A549 (cell line): ENCODE measurements at regions of chr10 and their contacts with region 1.

Region 1: DNA sequence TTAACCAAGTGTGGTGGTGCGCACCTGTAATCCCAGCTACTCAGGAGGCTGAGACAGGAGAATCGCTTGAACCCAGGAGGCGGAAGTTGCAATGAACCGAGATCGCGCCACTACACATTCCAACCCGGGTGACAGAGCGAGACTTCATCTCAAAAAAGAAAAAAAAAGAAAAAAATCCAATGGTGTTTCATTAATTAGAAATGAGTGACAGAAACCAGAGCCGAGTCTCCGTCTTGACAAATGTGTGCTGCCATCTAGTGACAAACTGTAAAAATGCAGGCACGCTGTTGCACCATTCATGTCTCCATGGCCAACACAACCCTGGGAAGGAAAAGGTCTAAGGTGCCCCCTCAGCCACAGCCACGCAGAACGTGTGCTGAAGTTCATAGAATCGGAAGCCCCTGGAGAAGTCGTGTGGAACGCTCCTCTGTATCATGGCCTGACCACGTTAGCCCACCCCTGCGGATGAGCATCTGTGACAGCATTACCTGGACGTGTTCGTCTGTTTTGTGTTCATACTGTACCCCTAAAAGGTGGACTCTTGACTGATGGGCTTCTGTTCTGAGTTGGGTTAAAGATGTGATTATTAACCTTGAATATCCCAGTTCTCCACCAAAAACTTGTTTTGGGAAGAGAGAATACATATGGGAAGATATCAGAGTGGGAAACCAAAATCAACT is 94.9 kb downstream of the LYZL2 start:
- DNase-seq: peak; percentile 61 to 85
- ATAC-seq: peak; percentile 41 to 58; a peak in 3 of 6 replicates
- H3K4me3 ChIP-seq: no peak overlapping the region
- H3K27ac ChIP-seq: peak overlapping the region; percentile 78 to 88
- H3K4me1 ChIP-seq: peaks cover 61% of the 10 kb centered on the region
- CTCF ChIP-seq: peak; percentile 84
- EP300 ChIP-seq: no peak
- POLR2A ChIP-seq: no peak
- RAD21 ChIP-seq: peak; percentile 89 to 91

Region 2: DNA sequence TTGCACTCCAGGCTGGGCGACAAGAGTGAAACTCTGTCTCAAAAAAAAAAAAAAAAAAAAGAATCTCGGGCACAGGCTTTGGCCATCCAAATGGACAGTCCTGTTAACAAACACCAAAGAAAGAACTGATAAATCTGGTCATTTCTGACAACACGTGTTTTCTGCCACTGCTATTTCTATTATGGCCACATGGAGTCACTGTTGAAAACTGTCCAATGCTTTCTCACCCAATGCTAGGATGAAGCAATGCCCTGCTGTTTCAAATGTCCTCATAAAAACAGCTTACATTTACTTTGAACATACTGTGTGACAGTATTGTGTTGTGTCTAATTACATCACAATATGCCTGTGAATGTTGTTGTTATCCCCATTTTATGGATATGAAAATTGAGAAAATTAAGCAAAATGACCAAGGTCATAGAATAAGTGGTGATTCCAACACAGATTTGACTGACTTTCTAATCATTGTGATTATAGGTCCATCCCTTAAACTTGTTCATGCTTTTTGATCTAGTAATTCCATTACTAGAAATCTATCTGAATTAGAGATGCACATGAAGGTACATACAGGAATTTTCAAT is 120.5 kb before region 1 on chr10:
- CTCF ChIA-PET with region 1: interaction called, 15 read pairs
- POLR2A ChIA-PET with region 1: no interaction called
- DNase-seq: peak; percentile 80 to 84
- ATAC-seq: peak; percentile 80 to 85
- H3K4me3 ChIP-seq: no peak overlapping the region
- H3K27ac ChIP-seq: peak overlapping the region; percentile 27 to 63; a peak in 4 of 6 replicates
- H3K4me1 ChIP-seq: peaks cover 17% of the 10 kb centered on the region
- CTCF ChIP-seq: peak; percentile 76
- EP300 ChIP-seq: no peak
- POLR2A ChIP-seq: no peak
- RAD21 ChIP-seq: peak; percentile 84

Region 3: DNA sequence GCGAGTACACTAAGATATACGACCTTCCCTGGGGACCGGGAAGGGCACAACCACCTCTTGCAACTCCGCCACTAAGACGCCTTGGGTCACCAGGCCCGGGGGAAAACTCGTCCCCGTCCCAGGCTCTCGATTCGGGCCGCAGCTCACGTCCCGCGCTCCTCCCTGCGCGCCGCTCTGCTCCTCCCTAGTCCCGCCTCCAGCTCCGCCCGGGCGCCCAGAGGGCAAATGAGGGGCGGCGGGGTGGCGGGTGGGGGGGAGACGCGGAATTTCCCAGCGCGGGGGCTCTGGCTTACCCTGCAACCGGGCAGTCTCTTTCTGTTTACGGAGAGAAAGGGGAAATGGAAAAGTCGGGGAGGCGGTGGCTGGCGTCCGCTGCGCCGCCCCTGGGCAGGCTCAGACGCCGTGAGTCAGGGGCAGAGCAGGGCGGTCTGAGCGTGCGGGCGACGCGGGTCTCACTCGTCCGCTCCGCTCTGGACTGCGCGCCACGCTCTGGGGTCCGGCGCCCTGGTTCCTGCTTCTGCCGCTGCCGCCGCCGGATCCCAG is 100.8 kb before region 1 on chr10 and contains the start of gene MAP3K8:
- CTCF ChIA-PET with region 1: interaction called, 12 read pairs
- POLR2A ChIA-PET with region 1: interaction called, 28 read pairs
- DNase-seq: peak; percentile 83 to 94
- ATAC-seq: peak; percentile 79 to 87
- H3K4me3 ChIP-seq: peak within 1 kb of the TSS; percentile 94
- H3K27ac ChIP-seq: peak within 1 kb of the TSS; percentile 91 to 97
- H3K4me1 ChIP-seq: peaks cover 55% of the 10 kb centered on the region
- CTCF ChIP-seq: no peak
- EP300 ChIP-seq: no peak
- POLR2A ChIP-seq: peak; percentile 92
- RAD21 ChIP-seq: no peak; a peak in 1 of 5 replicates
- polyA plus RNA-seq, gene MAP3K8: 45.1 and 50.8 TPM in 2 replicates

Region 4: GRCh38 chr10:30459283-30459682 is 75.3 kb before region 1 on chr10:
- CTCF ChIA-PET with region 1: interaction called, 13 read pairs
- POLR2A ChIA-PET with region 1: no interaction called
- DNase-seq: no peak
- ATAC-seq: peak in 1 of 2 experiments; percentile 13; a peak in 3 of 6 replicates
- H3K4me3 ChIP-seq: no peak overlapping the region
- H3K27ac ChIP-seq: no peak overlapping the region; a peak in 1 of 6 replicates
- H3K4me1 ChIP-seq: peaks cover 35% of the 10 kb centered on the region
- CTCF ChIP-seq: no peak
- EP300 ChIP-seq: no peak
- POLR2A ChIP-seq: no peak
- RAD21 ChIP-seq: no peak

Region 5: GRCh38 chr10:30519639-30520038 is 15.0 kb before region 1 on chr10:
- CTCF ChIA-PET with region 1: interaction called, 19 read pairs
- POLR2A ChIA-PET with region 1: no interaction called
- DNase-seq: no peak
- ATAC-seq: no peak
- H3K4me3 ChIP-seq: no peak overlapping the region
- H3K27ac ChIP-seq: peak overlapping the region in 1 of 2 experiments; percentile 92; a peak in 3 of 6 replicates
- H3K4me1 ChIP-seq: peaks cover 23% of the 10 kb centered on the region; the same call in 2 of the 3 replicates
- CTCF ChIP-seq: no peak
- EP300 ChIP-seq: no peak
- POLR2A ChIP-seq: no peak
- RAD21 ChIP-seq: no peak

Region 6: GRCh38 chr10:30763918-30764317 is 229.3 kb after region 1 on chr10:
- CTCF ChIA-PET with region 1: no interaction called
- POLR2A ChIA-PET with region 1: no interaction called
- DNase-seq: no peak
- ATAC-seq: no peak
- H3K4me3 ChIP-seq: no peak overlapping the region
- H3K27ac ChIP-seq: no peak overlapping the region
- H3K4me1 ChIP-seq: no peaks in the 10 kb centered on the region
- CTCF ChIP-seq: no peak
- EP300 ChIP-seq: no peak
- POLR2A ChIP-seq: no peak
- RAD21 ChIP-seq: no peak